HEK293 (cell line): ENCODE measurements at regions of chr15 and their contacts with region 1.

Region 1: DNA sequence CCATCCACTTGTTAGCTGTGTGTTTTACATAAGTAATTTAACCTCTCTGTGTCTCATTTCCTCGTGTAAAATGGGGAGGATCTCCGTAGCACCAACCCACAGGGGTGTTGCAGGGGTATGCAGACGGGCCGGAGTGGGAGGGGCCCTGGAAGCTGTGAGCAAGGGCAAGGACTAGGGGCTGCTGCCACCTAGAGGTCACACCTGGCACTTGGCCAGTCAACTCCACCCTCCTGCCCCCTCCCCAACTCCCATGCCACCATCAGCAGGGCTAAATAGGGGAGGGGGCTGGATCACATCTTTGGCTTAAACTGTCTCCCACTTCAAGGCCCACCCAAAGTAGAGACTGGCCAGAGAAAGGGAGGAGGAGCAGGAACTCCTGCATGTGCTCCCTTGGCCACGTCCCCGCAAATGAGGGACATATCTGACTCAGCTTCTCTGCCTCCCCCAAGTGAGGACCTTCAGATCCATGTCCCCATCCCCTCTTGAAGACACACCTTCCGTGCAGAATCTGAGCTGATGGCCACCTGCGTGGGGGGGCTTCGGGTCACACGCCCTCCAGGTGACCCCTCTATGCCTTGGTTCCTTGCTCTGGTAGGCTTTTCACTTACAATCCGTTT is 2.6 kb downstream of the CCDC9B start:
- H3K4me3 ChIP-seq: no peak overlapping the region
- H3K27ac ChIP-seq: no peak overlapping the region
- H3K4me1 ChIP-seq: peaks cover 10% of the 10 kb centered on the region
- CTCF ChIP-seq: peak; percentile 84

Region 2: DNA sequence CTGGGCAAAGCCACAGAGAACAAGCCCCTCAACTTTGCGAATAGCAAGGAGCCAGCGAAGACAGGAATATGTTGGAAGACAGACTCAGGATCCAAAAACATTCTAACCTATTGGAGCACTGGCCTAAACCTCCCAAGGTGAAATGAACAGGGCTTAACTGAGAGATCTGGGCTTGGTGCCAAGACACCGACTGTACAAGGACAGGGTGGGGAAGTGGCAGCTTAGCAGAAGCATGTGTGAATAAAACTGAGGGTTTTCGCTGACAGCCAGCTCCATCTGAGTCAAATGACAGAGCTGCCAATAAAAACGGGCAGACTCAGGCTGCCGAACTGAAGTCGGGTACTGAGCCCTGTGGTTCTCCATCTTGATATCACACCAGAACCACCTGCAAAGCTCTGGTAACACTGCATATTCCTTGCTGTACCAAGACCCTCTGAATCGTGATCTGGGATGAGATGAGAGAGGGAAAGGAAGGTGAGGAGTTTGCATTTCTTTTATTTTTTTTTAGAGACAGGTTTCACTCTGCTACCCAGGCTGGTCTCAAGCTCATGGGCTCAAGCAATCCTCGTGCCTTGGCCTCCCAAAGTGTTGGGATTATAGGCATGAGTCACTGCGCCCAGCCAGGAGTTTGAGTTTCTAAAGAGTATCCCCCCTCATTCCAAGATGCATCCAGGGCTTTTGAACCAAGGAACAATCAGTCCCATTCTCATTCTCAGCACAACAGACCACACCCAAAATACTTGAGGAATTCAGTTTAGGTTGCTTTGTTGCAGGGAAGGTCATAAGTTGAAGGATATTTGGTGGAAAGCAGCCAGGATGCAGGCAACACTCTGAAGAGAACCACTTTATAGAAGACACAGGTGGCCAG is 24.4 kb before region 1 on chr15:
- CTCF ChIA-PET with region 1: interaction called, 64 read pairs
- POLR2A ChIA-PET with region 1: interaction called, 4 read pairs
- H3K4me3 ChIP-seq: no peak overlapping the region
- H3K27ac ChIP-seq: no peak overlapping the region
- H3K4me1 ChIP-seq: no peaks in the 10 kb centered on the region; the same call in 1 of the 2 replicates
- CTCF ChIP-seq: no peak

Region 3: DNA sequence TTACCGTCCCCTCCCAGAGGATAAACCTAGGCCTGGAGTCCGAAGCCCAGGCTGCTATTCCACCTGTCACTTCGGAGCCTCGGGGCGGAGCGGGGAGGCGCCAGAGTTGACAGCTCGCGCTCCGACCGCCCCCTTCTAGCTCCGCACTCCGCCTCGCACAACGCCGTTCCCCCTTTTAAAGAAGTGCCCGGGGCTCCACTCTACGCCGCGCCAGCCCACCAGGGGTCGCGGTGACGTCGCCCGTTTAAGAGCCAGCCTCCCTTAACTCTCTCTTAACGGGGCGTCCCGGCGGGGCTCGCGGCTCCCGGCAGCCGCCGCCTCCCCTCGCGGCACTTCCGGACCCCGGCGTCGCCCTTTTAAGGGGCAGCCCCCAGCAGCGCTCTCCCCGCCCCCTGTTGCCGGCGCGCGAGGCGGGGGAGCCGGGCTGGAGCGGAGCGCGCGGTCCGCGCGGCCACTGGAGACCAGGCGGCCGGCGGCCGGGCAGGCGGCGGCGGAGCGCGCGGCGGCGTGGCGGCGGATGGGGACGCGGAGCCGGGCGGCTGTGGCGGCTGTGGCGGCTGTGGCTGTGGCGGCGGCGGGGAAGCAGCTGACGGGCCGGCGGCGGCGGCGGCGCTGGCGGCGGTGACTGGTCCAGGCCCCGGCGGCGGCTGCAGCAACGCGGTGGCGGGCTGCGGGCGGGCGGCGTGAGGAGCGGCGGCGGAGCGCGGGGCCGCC is 14.8 kb before region 1 on chr15 and contains the start of gene INAFM2:
- CTCF ChIA-PET with region 1: interaction called, 82 read pairs
- POLR2A ChIA-PET with region 1: interaction called, 5 read pairs
- H3K4me3 ChIP-seq: peak within 1 kb of the TSS; percentile 70
- H3K27ac ChIP-seq: peak within 1 kb of the TSS; percentile 81; the same call in 1 of the 2 replicates
- H3K4me1 ChIP-seq: peaks cover 13% of the 10 kb centered on the region; the same call in 1 of the 2 replicates
- CTCF ChIP-seq: peak; percentile 89

Region 4: DNA sequence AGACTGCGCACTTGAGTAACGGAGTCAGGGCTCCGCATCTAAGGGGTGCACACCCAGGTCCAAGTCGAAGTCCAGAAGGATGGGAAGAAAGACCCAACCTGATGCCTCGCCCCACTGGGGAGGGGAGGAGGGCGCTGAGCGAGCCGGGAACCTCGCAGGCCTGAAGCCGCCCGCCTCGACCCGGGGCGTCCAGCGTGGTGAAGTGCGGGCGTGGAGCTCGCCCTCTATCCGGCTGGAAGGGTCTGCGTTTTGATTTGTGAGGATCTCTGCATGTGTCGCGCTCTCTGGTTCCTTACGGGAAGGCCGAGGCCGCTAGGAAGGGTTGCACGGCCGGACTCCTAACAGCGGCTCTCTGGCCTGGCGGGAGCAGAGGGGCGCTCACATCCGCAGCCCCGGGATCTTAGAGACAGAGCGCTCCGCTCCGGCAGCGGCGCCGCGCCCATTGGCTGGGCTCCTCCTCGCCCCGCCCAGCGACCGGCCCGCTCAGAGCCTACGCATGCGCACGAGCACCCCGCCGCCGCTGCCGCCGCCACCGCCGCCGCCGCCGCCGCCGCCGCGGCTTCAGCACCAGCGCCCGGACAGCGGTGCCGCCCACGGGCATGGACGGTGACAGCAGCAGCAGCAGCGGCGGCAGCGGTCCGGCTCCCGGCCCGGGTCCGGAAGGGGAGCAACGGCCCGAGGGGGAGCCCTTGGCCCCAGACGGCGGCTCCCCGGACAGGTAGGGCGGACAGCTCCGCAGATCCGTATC is 19.7 kb after region 1 on chr15 and contains the start of gene DISP2:
- CTCF ChIA-PET with region 1: interaction called, 14 read pairs
- POLR2A ChIA-PET with region 1: no interaction called
- H3K4me3 ChIP-seq: peak within 1 kb of the TSS; percentile 48
- H3K27ac ChIP-seq: no peak within 1 kb of the TSS
- H3K4me1 ChIP-seq: 0 out of 2 replicates have a peak, but pooled peaks cover 4% of the 10 kb centered on the region
- CTCF ChIP-seq: 0 out of 2 replicates have a peak, but pooled peaks have one; percentile 14